ENCODE measurements at regions of chr12 and their contacts with region 1.

Region 1: DNA sequence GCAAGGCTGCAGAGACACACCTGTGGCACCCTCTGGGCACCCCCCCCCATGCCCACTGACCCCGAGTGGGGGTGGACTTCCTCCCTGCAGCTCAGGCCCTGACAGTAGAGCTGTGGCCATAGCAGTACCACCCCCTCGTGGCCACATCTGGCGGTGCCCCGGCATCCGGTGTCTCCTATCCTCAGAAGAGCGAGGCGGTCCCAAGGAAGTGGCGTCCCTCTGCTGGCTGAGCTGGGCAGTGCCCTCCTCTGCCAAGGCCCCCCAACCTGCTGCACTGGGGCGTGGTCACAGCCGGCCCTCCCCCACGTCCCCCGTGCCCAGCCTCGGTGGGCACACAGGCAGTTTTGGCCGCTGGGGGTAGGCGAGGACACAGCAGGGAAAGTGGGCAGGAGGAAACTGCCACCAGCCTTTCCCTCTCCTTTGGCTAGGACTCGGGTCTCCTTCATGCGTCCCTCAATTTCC is 6.0 kb upstream of the SLC6A12 start:
- DNase-seq: peak; percentile 72 to 98
- H3K4me3 ChIP-seq: peak overlapping the region in 2 of 4 experiments; percentile 14 to 40; a peak in 2 of 8 replicates
- H3K27ac ChIP-seq: no peak overlapping the region
- H3K4me1 ChIP-seq: peaks cover 0 to 11% (median 9%) of the 10 kb centered on the region in 4 experiments; a peak in 6 of 7 replicates
- H3K27me3 ChIP-seq: peaks cover 0 to under 1% (median 0%) of the 10 kb centered on the region in 4 experiments; a peak in 1 of 7 replicates
- CTCF ChIP-seq: peak in 2 of 3 experiments; percentile 99; a peak in 3 of 4 replicates
- EP300 ChIP-seq: no peak
- POLR2A ChIP-seq: no peak
- RAD21 ChIP-seq: peak; percentile 90 to 94

Region 2: GRCh38 chr12:21301-22189 is 198.4 kb before region 1 on chr12:
- CTCF ChIA-PET with region 1: no interaction called
- POLR2A ChIA-PET with region 1: no interaction called
- DNase-seq: no peak
- H3K4me3 ChIP-seq: no peak overlapping the region
- H3K27ac ChIP-seq: no peak overlapping the region
- H3K4me1 ChIP-seq: no peaks in the 10 kb centered on the region
- H3K27me3 ChIP-seq: no peaks in the 10 kb centered on the region
- CTCF ChIP-seq: no peak
- EP300 ChIP-seq: no peak
- POLR2A ChIP-seq: no peak
- RAD21 ChIP-seq: no peak

Region 3: GRCh38 chr12:106118-106591 is 113.8 kb before region 1 on chr12:
- CTCF ChIA-PET with region 1: interaction called, 20 read pairs
- POLR2A ChIA-PET with region 1: no interaction called
- DNase-seq: no peak
- H3K4me3 ChIP-seq: no peak overlapping the region
- H3K27ac ChIP-seq: no peak overlapping the region
- H3K4me1 ChIP-seq: peaks cover 0 to 17% (median 9%) of the 10 kb centered on the region in 4 experiments; a peak in 6 of 7 replicates
- H3K27me3 ChIP-seq: no peaks in the 10 kb centered on the region; a peak in 1 of 7 replicates
- CTCF ChIP-seq: peak; percentile 44 to 79 (median 58)
- EP300 ChIP-seq: no peak
- POLR2A ChIP-seq: no peak
- RAD21 ChIP-seq: peak; percentile 54 to 56

Region 4: DNA sequence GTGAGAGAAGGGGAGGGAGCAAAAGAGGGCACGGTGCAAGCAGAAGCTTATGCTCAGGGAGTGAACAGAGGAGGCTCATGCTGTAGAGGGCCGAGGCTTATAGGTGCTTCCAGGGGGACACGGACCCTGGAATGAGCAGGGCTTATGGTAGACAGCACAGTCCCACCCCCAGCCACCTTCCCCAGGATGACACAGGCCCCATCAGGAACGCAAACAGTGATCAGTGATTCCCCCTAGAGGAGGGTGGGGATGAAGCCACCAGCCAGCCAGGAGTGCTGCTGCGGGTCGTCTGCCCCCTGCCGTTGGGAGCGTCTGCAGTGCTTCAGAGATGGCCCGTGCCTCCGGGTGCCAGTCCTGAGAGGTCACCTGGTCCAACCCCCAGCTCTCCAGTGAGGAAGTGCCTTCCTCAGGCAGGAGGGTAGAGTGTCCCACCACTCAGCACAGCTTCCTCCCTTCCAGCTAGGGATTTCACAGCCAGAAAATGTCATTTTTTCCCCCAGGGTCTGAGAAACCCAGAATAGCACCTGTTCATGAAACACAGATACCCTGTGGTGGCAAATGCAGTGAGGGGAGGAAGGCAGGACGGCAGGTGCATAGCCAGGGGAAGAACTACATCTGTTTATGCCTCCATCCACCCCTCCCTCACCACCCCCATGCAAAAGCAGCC is 66.7 kb before region 1 on chr12:
- CTCF ChIA-PET with region 1: interaction called, 39 read pairs
- POLR2A ChIA-PET with region 1: no interaction called
- DNase-seq: peak; percentile 70 to 89
- H3K4me3 ChIP-seq: peak overlapping the region in 1 of 4 experiments; percentile 29; a peak in 1 of 8 replicates
- H3K27ac ChIP-seq: no peak overlapping the region
- H3K4me1 ChIP-seq: peaks cover 0 to 11% (median 2%) of the 10 kb centered on the region in 4 experiments; a peak in 5 of 7 replicates
- H3K27me3 ChIP-seq: no peaks in the 10 kb centered on the region
- CTCF ChIP-seq: peak; percentile 99
- EP300 ChIP-seq: no peak
- POLR2A ChIP-seq: no peak
- RAD21 ChIP-seq: peak; percentile 82 to 88

Region 5: GRCh38 chr12:176321-177181 is 43.4 kb before region 1 on chr12:
- CTCF ChIA-PET with region 1: interaction called, 55 read pairs
- POLR2A ChIA-PET with region 1: interaction called, 3 read pairs
- DNase-seq: no peak
- H3K4me3 ChIP-seq: no peak overlapping the region
- H3K27ac ChIP-seq: no peak overlapping the region
- H3K4me1 ChIP-seq: peaks cover 0 to 14% (median 7%) of the 10 kb centered on the region in 4 experiments; a peak in 6 of 7 replicates
- H3K27me3 ChIP-seq: no peaks in the 10 kb centered on the region; a peak in 1 of 7 replicates
- CTCF ChIP-seq: no peak
- EP300 ChIP-seq: no peak
- POLR2A ChIP-seq: no peak
- RAD21 ChIP-seq: no peak

Region 6: DNA sequence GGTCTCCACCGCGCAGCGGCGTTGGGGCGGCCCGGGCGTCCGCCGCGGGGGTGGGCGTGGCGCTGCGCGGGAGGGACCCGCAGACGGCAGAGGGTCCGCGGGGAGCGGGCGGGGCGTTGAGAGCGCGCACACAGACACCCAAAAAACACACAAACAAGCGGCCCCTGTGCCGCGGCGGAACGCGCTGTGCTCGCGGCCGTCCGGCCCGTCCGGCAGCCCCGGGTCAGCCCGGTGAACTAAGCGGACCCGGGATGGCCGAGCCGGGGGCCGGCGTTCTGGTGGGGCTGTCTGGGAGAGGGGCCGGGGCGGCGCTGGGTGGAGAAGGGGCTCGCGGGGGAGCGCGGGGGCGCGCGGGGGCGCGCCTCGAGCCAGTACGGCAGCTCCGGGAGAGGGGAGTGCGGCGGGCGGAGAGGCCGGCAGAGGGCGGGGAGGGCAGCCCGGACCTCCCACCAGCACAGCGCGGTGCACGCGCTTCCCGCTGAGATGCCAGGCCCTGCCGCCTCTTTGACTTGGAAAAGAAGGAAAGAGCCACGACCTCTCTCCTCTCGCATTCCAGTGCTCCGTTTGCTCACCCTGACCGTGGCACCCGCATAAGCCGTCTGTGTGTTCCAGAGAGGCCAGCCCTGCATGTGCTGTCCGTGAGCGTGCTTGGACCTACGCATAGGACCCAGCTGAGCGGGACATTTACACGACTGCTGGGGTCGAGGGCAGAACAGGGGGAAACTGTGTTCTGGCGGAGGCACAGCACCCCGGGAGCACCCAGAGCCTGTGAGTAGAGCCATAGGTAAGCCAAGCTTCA is 16.3 kb before region 1 on chr12:
- CTCF ChIA-PET with region 1: interaction called, 74 read pairs
- POLR2A ChIA-PET with region 1: no interaction called
- DNase-seq: peak in 1 of 2 experiments; percentile 78
- H3K4me3 ChIP-seq: peak overlapping the region; percentile 55 to 80 (median 62)
- H3K27ac ChIP-seq: no peak overlapping the region
- H3K4me1 ChIP-seq: peaks cover 7 to 18% (median 12%) of the 10 kb centered on the region in 4 experiments
- H3K27me3 ChIP-seq: peaks cover 5 to 51% (median 33%) of the 10 kb centered on the region in 4 experiments
- CTCF ChIP-seq: peak; percentile 13 to 15 (median 14); a peak in 3 of 4 replicates
- EP300 ChIP-seq: no peak
- POLR2A ChIP-seq: no peak
- RAD21 ChIP-seq: no peak

Region 7: GRCh38 chr12:252636-253035 is 32.7 kb after region 1 on chr12:
- CTCF ChIA-PET with region 1: interaction called, 21 read pairs
- POLR2A ChIA-PET with region 1: no interaction called
- DNase-seq: peak in 1 of 2 experiments; percentile 28
- H3K4me3 ChIP-seq: no peak overlapping the region
- H3K27ac ChIP-seq: no peak overlapping the region
- H3K4me1 ChIP-seq: no peaks in the 10 kb centered on the region
- H3K27me3 ChIP-seq: no peaks in the 10 kb centered on the region
- CTCF ChIP-seq: no peak
- EP300 ChIP-seq: no peak
- POLR2A ChIP-seq: no peak
- RAD21 ChIP-seq: no peak